Posterior vena cava (tissue), 2 donors: ENCODE measurements at regions of chr6 and their contacts with region 1.

Region 1: DNA sequence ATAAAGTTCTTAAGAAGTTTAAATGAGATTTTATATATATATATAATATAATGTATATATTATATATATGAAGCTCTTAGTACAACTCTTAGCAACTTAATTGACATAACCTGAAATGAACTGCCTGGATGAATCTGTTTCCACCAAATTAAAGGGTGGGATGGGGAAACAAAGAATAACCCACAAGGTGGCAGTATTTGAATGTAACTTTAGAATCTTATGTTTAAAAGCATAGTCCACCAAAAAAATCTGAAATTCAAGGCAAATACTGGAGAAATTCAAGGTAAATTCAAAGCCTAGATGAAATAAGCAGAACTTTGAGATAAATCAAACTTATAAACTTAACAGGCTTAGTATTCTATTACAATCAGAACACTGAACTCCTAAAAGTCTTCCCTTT is 4.4 kb upstream of the IBTK start:
- DNase-seq: no peak

Region 2: DNA sequence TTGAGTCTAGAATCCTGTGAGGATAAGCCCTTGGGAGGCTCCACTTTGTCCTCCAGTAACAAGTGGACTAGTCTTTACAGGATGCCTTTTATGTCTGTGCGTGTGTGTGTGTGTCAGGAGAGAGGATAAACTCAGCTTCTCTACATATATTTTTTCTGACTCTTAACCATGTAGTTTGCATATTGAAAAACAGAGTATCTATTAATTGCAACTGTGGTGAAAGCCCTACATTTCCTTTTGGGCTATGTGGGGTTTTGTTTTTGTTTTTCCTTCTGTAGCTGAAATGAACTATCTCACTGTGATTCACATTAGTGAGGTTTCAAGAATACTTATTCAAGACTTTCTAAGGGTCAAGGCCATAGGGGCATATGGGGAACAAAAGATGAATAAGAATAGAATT is 129.3 kb after region 1 on chr6:
- intact Hi-C with region 1: no loop called
- DNase-seq: no peak

Region 3: DNA sequence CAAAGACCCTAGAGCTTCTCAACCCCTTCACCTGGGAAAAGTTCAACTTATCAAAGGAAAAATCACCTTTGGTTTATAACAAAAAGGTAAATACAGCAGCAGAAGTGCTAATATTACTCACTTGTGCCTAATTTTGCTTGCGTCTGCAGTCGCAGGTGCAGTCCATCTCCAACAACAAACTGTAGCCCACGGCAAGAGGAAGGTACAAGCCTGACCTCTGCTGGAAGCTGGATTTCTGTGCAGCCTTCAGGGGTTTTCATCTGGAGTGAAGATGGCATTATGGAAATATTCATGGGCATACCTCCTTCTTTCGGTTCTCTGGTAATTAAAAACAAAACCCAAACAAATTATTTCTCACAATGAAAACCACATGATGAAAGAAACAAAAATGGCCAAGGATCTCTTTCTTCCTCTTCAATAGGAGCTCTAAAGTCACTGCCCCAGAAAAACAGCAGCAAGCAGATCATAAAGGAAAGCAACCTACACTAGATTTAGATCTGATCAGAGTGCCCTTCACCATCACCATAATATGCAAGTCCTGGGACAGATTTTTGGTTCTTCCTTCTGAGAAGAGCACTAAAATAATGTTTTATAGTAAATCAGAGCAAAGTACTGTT is 805.9 kb after region 1 on chr6:
- intact Hi-C with region 1: loop called (anchors 5 to 10 kb)
- DNase-seq: no peak